CD8-positive, alpha-beta memory T cell (primary cell): ENCODE measurements at regions of chr16 and their contacts with region 1.

Region 1: DNA sequence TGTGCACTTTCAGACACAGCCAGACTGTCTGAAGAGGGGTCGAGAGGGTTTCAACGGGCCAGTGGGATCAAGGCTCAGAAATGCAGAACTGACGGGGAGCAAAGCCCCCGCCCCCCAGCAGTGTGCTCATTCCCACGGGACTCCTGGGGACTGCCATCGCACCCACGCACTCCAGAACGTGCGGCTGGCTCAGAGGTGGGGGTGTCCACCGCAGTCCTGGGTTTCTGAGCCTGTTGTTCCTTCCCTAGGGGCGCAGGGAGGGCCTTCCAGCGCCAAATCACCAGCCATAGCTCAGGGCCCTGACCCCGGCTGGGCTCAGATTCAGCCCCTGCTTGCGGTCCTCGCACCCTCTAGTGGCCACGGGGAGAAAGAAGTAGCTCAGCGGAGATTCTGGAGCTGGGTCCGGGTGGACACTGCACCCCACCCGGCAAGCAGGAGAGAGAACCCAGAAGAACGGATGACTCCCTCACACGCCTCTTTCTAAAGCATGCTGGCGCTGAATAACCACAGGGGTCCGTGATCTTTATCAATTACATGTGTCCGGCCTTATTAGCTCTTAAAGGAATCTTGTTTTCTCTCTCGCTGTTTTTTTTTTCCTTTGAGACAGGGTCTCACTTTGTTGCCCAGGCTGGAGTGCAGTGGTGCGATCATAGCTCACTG is 45.0 kb upstream of the USP7 start:
- DNase-seq: peak; percentile 39 to 73 (median 43)
- H3K4me3 ChIP-seq: no peak overlapping the region
- H3K4me3 Mint-ChIP-seq: peak overlapping the region in 2 of 7 donors; percentile 23 to 39
- H3K27ac ChIP-seq: no peak overlapping the region
- H3K27ac Mint-ChIP-seq: no peak overlapping the region
- H3K4me1 ChIP-seq: peaks cover 3% of the 10 kb centered on the region
- H3K4me1 Mint-ChIP-seq: peaks cover 4 to 9% (median 7%) of the 10 kb centered on the region in 3 donors
- H3K27me3 ChIP-seq: no peaks in the 10 kb centered on the region
- H3K27me3 Mint-ChIP-seq: peaks cover 6 to 28% of the 10 kb centered on the region in 2 donors

Region 2: GRCh38 chr16:8892101-8892575 is 116.6 kb before region 1 on chr16:
- CTCF ChIA-PET with region 1: interaction called, 20 read pairs
- POLR2A ChIA-PET with region 1: no interaction called
- DNase-seq: no peak
- H3K4me3 ChIP-seq: no peak overlapping the region
- H3K4me3 Mint-ChIP-seq: peak overlapping the region in 5 of 7 donors; percentile 41 to 68 (median 57)
- H3K27ac ChIP-seq: no peak overlapping the region
- H3K27ac Mint-ChIP-seq: peak overlapping the region; percentile 75 to 95 (median 87)
- H3K4me1 ChIP-seq: no peaks in the 10 kb centered on the region
- H3K4me1 Mint-ChIP-seq: peaks cover 11 to 32% (median 23%) of the 10 kb centered on the region in 3 donors
- H3K27me3 ChIP-seq: no peaks in the 10 kb centered on the region
- H3K27me3 Mint-ChIP-seq: peaks cover 0 to 1% of the 10 kb centered on the region in 2 donors

Region 3: GRCh38 chr16:8936421-8936820 is 72.3 kb before region 1 on chr16:
- CTCF ChIA-PET with region 1: interaction called, 24 read pairs
- POLR2A ChIA-PET with region 1: no interaction called
- DNase-seq: peak; percentile 42 to 82 (median 54)
- H3K4me3 ChIP-seq: no peak overlapping the region
- H3K4me3 Mint-ChIP-seq: peak overlapping the region in 6 of 7 donors; percentile 6 to 76 (median 28)
- H3K27ac ChIP-seq: no peak overlapping the region
- H3K27ac Mint-ChIP-seq: peak overlapping the region in 7 of 8 donors; percentile 6 to 61 (median 43)
- H3K4me1 ChIP-seq: peaks cover 63% of the 10 kb centered on the region
- H3K4me1 Mint-ChIP-seq: peaks cover 79 to 99% (median 93%) of the 10 kb centered on the region in 3 donors
- H3K27me3 ChIP-seq: no peaks in the 10 kb centered on the region
- H3K27me3 Mint-ChIP-seq: peaks cover 0 to 2% of the 10 kb centered on the region in 2 donors

Region 4: DNA sequence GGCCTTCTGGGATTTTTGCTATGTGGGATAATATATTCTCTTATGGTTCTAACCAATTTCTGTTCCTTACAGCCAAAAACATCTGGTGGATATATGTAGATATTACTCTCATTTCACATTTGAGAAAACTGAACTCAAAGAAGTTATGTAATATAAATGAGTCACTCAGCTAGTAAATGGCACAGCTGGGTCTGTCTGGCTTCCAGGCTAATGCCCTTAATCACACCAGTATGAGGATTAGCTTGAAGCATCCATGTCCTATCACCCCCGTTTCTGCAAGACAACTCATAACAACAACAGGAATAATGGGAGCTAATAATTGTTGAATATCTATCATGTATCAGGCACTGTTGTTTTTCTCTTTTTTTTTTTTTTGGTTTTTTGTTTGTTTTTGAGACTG is 10.6 kb before region 1 on chr16:
- CTCF ChIA-PET with region 1: interaction called, 28 read pairs
- POLR2A ChIA-PET with region 1: no interaction called
- DNase-seq: no peak
- H3K4me3 ChIP-seq: no peak overlapping the region
- H3K4me3 Mint-ChIP-seq: no peak overlapping the region
- H3K27ac ChIP-seq: no peak overlapping the region
- H3K27ac Mint-ChIP-seq: no peak overlapping the region
- H3K4me1 ChIP-seq: no peaks in the 10 kb centered on the region
- H3K4me1 Mint-ChIP-seq: no peaks in the 10 kb centered on the region
- H3K27me3 ChIP-seq: no peaks in the 10 kb centered on the region
- H3K27me3 Mint-ChIP-seq: no peaks in the 10 kb centered on the region

Region 5: DNA sequence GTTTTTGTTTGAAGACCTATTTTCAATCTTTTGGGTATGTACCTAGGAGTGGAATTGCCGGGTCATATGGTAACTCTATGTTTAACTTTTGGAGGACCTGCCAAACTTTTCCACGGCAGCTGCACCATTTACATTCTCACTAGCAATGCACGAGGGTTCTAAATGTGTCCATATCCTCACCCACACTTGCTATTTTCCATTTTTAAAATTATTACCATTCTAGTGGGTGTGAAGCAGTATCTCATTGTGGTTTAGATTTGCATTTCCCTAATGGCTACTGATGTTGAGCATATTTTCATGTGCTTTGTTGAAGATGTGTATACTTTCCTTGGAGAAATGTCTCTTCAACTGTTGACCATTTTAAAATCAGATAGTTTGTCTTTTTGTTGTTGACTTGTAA is 22.4 kb after region 1 on chr16:
- CTCF ChIA-PET with region 1: no interaction called
- POLR2A ChIA-PET with region 1: no interaction called
- DNase-seq: no peak
- H3K4me3 ChIP-seq: no peak overlapping the region
- H3K4me3 Mint-ChIP-seq: no peak overlapping the region
- H3K27ac ChIP-seq: no peak overlapping the region
- H3K27ac Mint-ChIP-seq: no peak overlapping the region
- H3K4me1 ChIP-seq: no peaks in the 10 kb centered on the region
- H3K4me1 Mint-ChIP-seq: no peaks in the 10 kb centered on the region
- H3K27me3 ChIP-seq: no peaks in the 10 kb centered on the region
- H3K27me3 Mint-ChIP-seq: peaks cover 4 to 7% of the 10 kb centered on the region in 2 donors

Region 6: GRCh38 chr16:9099131-9099625 is 90.4 kb after region 1 on chr16:
- CTCF ChIA-PET with region 1: interaction called, 12 read pairs
- POLR2A ChIA-PET with region 1: no interaction called
- DNase-seq: no peak
- H3K4me3 ChIP-seq: no peak overlapping the region
- H3K4me3 Mint-ChIP-seq: peak overlapping the region; percentile 66 to 86 (median 81)
- H3K27ac ChIP-seq: no peak overlapping the region
- H3K27ac Mint-ChIP-seq: peak overlapping the region in 7 of 8 donors; percentile 25 to 90 (median 78)
- H3K4me1 ChIP-seq: peaks cover 94% of the 10 kb centered on the region
- H3K4me1 Mint-ChIP-seq: peaks cover 88 to 96% (median 95%) of the 10 kb centered on the region in 3 donors
- H3K27me3 ChIP-seq: no peaks in the 10 kb centered on the region
- H3K27me3 Mint-ChIP-seq: peaks cover 0 to 2% of the 10 kb centered on the region in 2 donors

Region 7: GRCh38 chr16:9138716-9139501 is 130.2 kb after region 1 on chr16:
- CTCF ChIA-PET with region 1: interaction called, 15 read pairs
- POLR2A ChIA-PET with region 1: no interaction called
- DNase-seq: peak; percentile 46 to 74 (median 54)
- H3K4me3 ChIP-seq: no peak overlapping the region
- H3K4me3 Mint-ChIP-seq: peak overlapping the region in 5 of 7 donors; percentile 7 to 51 (median 29)
- H3K27ac ChIP-seq: no peak overlapping the region
- H3K27ac Mint-ChIP-seq: peak overlapping the region in 2 of 8 donors; percentile 88 to 92
- H3K4me1 ChIP-seq: peaks cover 13% of the 10 kb centered on the region
- H3K4me1 Mint-ChIP-seq: peaks cover 26 to 34% (median 27%) of the 10 kb centered on the region in 3 donors
- H3K27me3 ChIP-seq: peaks cover 4% of the 10 kb centered on the region
- H3K27me3 Mint-ChIP-seq: peaks cover 0 to 9% of the 10 kb centered on the region in 2 donors